Thyroid gland (tissue), 4 donors: ENCODE measurements at regions of chr4 and their contacts with region 1.

Region 1: DNA sequence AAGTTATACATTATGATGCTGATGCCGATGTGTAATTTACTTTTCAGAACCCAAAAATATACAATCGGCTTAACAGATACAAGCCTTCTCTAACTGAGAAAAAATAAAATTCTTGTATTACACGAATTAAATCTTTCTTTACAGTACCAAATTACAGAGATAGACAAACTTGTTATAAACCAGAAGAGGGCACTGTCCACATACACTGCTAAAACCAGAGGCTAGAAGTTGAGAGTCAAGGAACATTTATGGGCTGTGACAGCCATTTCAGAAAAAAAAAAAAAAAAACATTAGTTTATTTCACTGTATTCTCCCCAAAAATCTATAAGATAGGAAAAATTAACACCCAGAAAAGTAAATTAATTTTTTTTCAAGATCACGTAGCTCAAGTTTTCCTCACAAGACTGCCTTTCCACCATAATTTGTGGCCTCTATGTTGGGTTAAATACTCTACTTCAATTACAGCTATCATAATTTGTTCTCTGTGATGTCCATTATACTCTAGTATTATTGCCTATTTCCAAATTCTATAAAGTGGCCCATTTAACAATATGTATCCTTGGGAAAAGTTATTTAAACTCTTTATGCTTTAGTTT is 12.0 kb downstream of the EREG start:
- DNase-seq: no peak
- H3K4me3 ChIP-seq: no peak overlapping the region
- H3K27ac ChIP-seq: no peak overlapping the region
- H3K4me1 ChIP-seq: no peaks in the 10 kb centered on the region
- H3K27me3 ChIP-seq: no peaks in the 10 kb centered on the region
- CTCF ChIP-seq: peak in 3 of 6 experiments; percentile 63 to 67 (median 65)
- POLR2A ChIP-seq: no peak

Region 2: GRCh38 chr4:73197220-73197619 is 1179.8 kb before region 1 on chr4:
- intact Hi-C with region 1: no loop called
- DNase-seq: no peak
- H3K4me3 ChIP-seq: no peak overlapping the region
- H3K27ac ChIP-seq: no peak overlapping the region
- H3K4me1 ChIP-seq: peaks cover 10 to 17% of the 10 kb centered on the region in 2 donors
- H3K27me3 ChIP-seq: no peaks in the 10 kb centered on the region
- CTCF ChIP-seq: no peak
- POLR2A ChIP-seq: no peak

Region 3: GRCh38 chr4:74531963-74532794 is 155.2 kb after region 1 on chr4:
- intact Hi-C with region 1: loop called (anchors 5 kb)
- DNase-seq: peak in 1 of 2 donors; percentile 2
- H3K4me3 ChIP-seq: no peak overlapping the region
- H3K27ac ChIP-seq: no peak overlapping the region
- H3K4me1 ChIP-seq: no peaks in the 10 kb centered on the region
- H3K27me3 ChIP-seq: no peaks in the 10 kb centered on the region
- CTCF ChIP-seq: peak in 5 of 6 experiments; percentile 20 to 71 (median 57)
- POLR2A ChIP-seq: no peak